Right ventricle myocardium inferior (tissue), 1 donor: ENCODE measurements at regions of chr18 and their contacts with region 1.

Region 1: GRCh38 chr18:7272311-7273049 is 41.6 kb downstream of the LRRC30 start:
- DNase-seq: peak; percentile 75
- ATAC-seq: peak; percentile 80

Region 2: DNA sequence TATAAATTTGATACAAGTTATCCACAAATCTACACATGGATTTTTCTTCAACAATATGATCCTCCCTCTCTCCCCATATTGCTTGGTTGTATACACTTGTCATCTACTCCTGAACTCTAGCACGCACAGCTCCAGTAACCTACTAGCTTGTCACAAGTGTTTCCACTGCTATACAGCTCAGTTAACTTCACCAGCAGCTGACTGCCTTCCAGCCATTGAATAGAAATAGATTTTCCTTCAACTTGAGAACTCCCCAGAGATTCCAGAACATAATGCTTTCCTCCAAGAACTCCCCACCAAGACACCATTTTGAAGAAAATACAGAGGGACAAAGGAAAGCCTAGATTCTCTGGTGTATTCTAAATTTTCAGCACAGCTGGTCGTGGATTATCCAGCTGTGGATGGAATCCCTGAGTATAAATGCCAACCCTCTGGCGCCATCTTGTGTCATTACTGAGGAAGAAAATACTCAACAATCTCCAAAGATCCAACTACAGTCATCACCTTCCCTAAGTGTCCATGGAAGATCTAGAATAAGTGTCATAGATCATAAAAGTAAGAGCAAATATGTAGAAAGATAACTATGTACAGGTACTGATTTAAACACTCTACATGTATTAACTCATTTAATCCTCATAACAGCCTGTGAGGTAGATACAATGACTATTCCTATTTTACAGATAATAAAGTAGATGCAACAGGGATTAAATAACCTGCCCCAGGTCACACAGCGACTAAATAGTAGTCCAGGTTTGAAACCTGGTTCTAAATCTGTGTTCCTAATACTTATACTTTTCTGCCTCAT is 386.3 kb before region 1 on chr18:
- intact Hi-C with region 1: no loop called
- DNase-seq: no peak
- ATAC-seq: peak; percentile 71

Region 3: GRCh38 chr18:7221424-7222155 is 50.9 kb before region 1 on chr18:
- intact Hi-C with region 1: loop called (anchors 5 kb)
- DNase-seq: no peak
- ATAC-seq: peak; percentile 72

Region 4: GRCh38 chr18:7459851-7460770 is 187.6 kb after region 1 on chr18:
- intact Hi-C with region 1: loop called (anchors 5 kb)
- DNase-seq: peak; percentile 81
- ATAC-seq: peak; percentile 83

Region 5: GRCh38 chr18:7755753-7756475 is 483.4 kb after region 1 on chr18:
- intact Hi-C with region 1: loop called (anchors 5 kb)
- DNase-seq: no peak
- ATAC-seq: peak; percentile 37

Region 6: GRCh38 chr18:8367217-8367988 is 1094.9 kb after region 1 on chr18:
- intact Hi-C with region 1: loop called (anchors 10 kb)
- DNase-seq: peak; percentile 66
- ATAC-seq: no peak

Region 7: DNA sequence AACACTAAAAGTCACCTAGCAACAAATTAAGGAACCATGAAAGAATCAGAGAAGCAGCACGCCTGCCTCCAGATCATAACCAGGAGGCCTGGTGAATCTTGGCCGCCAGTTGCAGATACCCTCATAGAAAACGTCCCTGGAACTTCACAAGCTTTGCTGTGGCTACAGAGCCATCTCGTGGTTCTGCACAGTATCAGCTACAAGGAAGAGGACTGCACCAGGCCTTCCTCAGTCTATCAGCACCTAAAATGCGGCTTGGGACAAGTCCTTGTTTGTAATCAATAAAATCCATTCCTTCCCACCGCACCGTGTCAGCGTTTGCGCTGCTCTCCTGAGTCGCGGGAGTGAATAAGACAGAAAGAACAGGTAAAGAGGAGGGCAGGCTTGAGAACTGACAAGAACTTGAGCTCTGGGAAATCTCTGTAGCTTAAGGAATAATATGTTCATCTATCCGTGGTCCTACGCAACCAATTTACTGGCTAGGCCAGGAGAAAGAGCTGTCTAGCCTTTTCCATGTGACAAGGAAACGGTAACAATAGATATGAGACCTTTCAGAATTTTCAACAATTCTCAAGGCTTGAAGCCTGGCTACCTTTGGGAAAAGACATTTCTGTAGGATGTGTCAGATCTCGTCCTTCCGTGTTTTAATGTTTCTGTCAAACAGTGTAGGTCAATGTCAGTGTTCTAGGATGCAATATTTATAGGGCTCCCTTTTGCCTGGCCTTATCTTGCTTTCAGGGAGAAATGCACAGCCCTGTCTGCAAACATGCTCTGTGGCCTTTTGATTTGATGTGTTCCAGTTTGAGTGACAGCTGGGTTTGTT is 1208.2 kb after region 1 on chr18:
- intact Hi-C with region 1: loop called (anchors 1 kb)
- DNase-seq: no peak
- ATAC-seq: peak; percentile 74